A673 (cell line): ENCODE measurements at regions of chr14 and their contacts with region 1.

Region 1: GRCh38 chr14:68157971-68158371 is 338.4 kb downstream of the RAD51B start:
- DNase-seq: peak; percentile 49
- H3K4me3 ChIP-seq: no peak overlapping the region
- H3K27ac ChIP-seq: peak overlapping the region; percentile 65
- H3K4me1 ChIP-seq: peaks cover 39% of the 10 kb centered on the region
- H3K27me3 ChIP-seq: no peaks in the 10 kb centered on the region
- CTCF ChIP-seq: no peak

Region 2: GRCh38 chr14:68113343-68113930 is 44.5 kb before region 1 on chr14:
- CTCF ChIA-PET with region 1: no interaction called
- POLR2A ChIA-PET with region 1: no interaction called
- intact Hi-C with region 1: loop called (anchors 2 kb)
- DNase-seq: peak; percentile 71
- H3K4me3 ChIP-seq: no peak overlapping the region
- H3K27ac ChIP-seq: peak overlapping the region; percentile 24
- H3K4me1 ChIP-seq: peaks cover 51% of the 10 kb centered on the region
- H3K27me3 ChIP-seq: no peaks in the 10 kb centered on the region
- CTCF ChIP-seq: no peak

Region 3: GRCh38 chr14:68172627-68173026 is 14.7 kb after region 1 on chr14:
- CTCF ChIA-PET with region 1: no interaction called
- POLR2A ChIA-PET with region 1: interaction called, 25 read pairs
- intact Hi-C with region 1: no loop called
- DNase-seq: no peak
- H3K4me3 ChIP-seq: no peak overlapping the region
- H3K27ac ChIP-seq: no peak overlapping the region
- H3K4me1 ChIP-seq: no peaks in the 10 kb centered on the region
- H3K27me3 ChIP-seq: no peaks in the 10 kb centered on the region
- CTCF ChIP-seq: no peak